Activated B cell treated with CpG ODN at 0.5 μM for 24 hours (primary cell): ENCODE measurements at regions of chr14 and their contacts with region 1.

Region 1: DNA sequence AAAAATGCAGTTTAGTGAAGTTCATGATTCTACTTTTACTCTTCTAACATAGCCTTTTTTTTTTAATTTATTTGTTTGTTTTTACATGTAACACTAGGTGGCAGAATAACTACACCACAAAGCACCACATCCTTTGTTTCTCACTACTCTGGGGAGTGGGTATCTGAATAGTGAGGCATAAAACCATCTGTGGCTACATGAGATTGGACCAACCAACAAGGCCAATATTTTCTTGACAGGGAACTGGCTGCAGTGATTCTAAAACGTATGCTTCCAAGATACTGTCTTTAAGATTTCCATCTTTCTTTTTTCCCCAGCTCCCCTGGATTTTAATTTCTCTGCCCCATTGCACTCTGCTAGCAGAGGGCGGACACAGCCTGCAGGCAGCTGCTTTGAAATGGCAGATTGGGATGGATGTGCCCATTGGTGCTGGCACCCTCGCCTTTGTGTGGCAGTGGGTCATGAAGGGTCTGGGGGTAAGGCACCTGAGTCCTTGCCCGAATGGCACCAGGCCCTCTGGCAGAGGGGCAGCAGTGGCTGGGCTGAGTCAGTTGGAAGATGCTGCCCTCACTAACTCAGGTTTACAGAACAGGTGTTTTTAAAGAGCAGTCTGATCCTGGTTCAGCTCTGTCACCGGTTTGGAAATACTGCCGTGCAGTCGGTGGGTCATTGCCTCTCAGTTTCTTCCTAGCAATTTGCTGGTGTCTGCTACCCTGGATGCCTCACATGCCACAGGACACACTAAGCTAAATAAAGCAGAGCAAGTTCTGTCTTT is 429.1 kb downstream of the RAD51B start:
- DNase-seq: peak; percentile 34
- ATAC-seq: peak; percentile 77
- H3K4me3 Mint-ChIP-seq: peak overlapping the region; percentile 19
- H3K27ac Mint-ChIP-seq: peak overlapping the region; percentile 90
- H3K4me1 Mint-ChIP-seq: peaks cover 72% of the 10 kb centered on the region
- H3K27me3 Mint-ChIP-seq: no peaks in the 10 kb centered on the region
- CTCF ChIP-seq: no peak

Region 2: DNA sequence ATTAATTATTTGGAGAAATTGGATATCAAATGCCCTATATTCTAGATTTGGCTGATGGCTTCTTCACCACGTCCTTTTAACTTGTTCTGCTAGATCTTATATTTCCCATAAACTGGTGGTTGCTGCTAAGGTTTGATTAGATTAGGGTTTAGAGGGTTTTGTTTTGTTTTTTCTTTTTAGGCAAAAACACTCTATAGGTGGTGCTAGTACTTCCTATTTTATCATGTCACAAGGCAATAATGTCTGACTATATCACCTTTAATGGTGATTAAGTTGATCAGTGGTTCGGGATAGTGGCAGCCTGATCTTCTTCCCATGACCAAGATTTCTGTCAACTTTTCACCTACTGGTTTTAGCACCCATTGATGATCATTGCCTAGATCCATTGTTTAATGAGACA is 26.1 kb after region 1 on chr14:
- CTCF ChIA-PET with region 1: interaction called, 15 read pairs
- POLR2A ChIA-PET with region 1: interaction called, 213 read pairs
- intact Hi-C with region 1: loop called (anchors 1 kb)
- DNase-seq: no peak
- ATAC-seq: no peak
- H3K4me3 Mint-ChIP-seq: peak overlapping the region; percentile 65
- H3K27ac Mint-ChIP-seq: peak overlapping the region; percentile 99
- H3K4me1 Mint-ChIP-seq: peaks cover 93% of the 10 kb centered on the region
- H3K27me3 Mint-ChIP-seq: no peaks in the 10 kb centered on the region
- CTCF ChIP-seq: no peak

Region 3: DNA sequence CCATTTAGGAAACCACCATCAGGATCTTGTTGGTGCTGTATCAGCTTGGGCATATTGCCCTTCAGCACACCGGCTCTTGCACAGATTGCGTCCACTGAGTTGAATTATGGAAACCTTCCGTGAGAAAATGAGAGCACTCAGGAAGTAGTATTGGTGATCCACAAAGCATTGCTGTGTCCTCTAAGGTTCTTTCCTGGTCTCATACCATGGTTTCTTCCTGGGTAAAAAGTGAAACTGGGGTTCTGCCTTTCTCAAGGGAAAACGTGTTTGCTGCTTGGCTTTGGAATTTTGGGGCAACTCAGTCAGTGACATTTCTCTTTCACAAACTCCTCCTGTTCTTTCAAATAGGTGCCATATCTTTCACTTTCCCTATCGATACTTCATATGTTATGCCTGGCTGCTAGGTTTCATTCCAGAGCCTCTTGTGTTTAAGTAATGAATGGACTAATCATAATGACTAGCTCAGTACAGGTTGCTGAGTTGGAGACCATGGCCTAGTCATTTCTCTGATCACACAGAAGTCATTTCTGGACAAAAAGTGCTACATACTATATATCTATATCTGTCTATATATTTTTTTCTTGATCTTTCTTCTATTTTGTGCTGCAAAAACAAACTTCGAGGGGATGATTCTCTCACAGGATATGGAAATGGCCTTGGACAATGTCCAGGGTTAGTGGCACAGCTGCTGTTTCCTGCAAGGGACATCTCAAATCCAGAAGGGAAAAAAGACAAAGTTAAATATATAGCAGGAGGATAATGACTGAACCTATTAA is 120.8 kb after region 1 on chr14:
- CTCF ChIA-PET with region 1: interaction called, 11 read pairs
- POLR2A ChIA-PET with region 1: interaction called, 21 read pairs
- intact Hi-C with region 1: no loop called
- DNase-seq: no peak
- ATAC-seq: peak; percentile 23
- H3K4me3 Mint-ChIP-seq: peak overlapping the region; percentile 59
- H3K27ac Mint-ChIP-seq: peak overlapping the region; percentile 95
- H3K4me1 Mint-ChIP-seq: peaks cover 94% of the 10 kb centered on the region
- H3K27me3 Mint-ChIP-seq: no peaks in the 10 kb centered on the region
- CTCF ChIP-seq: no peak

Region 4: DNA sequence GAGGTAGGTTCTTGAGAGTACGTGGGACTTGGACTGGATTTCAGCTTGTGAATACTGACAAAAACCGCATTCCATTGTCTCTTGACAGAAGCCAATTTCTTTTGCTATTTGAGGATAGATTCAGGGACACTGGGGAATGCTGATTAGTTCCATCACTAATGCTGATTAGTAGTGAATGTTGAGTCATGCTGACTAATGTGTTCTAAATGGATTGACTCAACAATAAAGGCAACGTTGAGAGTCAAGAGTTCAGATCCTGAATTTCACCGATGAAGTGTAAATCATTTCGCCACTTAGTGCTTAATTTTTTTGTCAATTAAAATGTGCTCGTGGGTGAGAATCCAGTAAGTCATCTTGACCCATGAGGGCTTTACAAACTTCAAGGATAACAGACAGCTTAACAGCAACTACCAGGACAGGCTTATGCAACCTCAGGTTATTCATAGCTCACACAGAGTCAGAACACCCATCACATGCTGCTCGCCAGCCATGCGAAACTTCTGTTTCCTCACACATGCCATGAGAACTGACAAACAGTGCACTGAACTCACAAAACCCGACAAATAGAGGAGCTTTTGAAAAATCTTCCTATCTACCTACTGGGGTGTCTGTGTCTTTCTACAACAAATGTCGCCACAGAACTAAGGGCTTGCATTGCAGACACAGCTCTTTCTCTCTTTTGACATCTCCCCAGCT is 227.7 kb after region 1 on chr14:
- CTCF ChIA-PET with region 1: no interaction called
- POLR2A ChIA-PET with region 1: interaction called, 9 read pairs
- intact Hi-C with region 1: loop called (anchors 2 kb)
- DNase-seq: peak; percentile 40
- ATAC-seq: peak; percentile 83
- H3K4me3 Mint-ChIP-seq: peak overlapping the region; percentile 62
- H3K27ac Mint-ChIP-seq: peak overlapping the region; percentile 99
- H3K4me1 Mint-ChIP-seq: peaks cover 89% of the 10 kb centered on the region
- H3K27me3 Mint-ChIP-seq: no peaks in the 10 kb centered on the region
- CTCF ChIP-seq: no peak

Region 5: DNA sequence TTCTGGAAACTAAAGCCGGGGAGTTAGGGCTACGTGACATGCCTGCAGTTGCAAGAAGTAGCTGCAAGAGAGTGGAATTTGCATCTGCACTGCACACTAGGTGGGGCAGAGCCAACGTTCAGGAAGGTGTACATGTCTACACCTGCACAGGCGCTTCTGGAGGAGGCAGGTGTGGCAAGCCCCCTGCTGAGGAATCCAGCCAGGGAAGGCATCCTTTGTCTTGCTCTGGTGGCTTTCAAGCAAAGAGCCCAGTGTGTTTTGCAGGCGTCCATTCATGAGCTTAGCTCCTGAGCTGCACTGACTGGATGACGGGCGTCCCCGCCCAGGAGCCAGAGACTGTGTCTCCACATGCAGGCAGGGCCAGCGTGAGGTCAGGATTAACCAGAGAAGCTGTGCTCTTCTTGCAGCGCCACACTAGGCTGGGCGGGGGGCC is 427.9 kb after region 1 on chr14:
- CTCF ChIA-PET with region 1: no interaction called
- POLR2A ChIA-PET with region 1: no interaction called
- intact Hi-C with region 1: no loop called
- DNase-seq: no peak
- ATAC-seq: no peak
- H3K4me3 Mint-ChIP-seq: no peak overlapping the region
- H3K27ac Mint-ChIP-seq: peak overlapping the region; percentile 61
- H3K4me1 Mint-ChIP-seq: peaks cover 63% of the 10 kb centered on the region
- H3K27me3 Mint-ChIP-seq: no peaks in the 10 kb centered on the region
- CTCF ChIP-seq: no peak

Region 6: DNA sequence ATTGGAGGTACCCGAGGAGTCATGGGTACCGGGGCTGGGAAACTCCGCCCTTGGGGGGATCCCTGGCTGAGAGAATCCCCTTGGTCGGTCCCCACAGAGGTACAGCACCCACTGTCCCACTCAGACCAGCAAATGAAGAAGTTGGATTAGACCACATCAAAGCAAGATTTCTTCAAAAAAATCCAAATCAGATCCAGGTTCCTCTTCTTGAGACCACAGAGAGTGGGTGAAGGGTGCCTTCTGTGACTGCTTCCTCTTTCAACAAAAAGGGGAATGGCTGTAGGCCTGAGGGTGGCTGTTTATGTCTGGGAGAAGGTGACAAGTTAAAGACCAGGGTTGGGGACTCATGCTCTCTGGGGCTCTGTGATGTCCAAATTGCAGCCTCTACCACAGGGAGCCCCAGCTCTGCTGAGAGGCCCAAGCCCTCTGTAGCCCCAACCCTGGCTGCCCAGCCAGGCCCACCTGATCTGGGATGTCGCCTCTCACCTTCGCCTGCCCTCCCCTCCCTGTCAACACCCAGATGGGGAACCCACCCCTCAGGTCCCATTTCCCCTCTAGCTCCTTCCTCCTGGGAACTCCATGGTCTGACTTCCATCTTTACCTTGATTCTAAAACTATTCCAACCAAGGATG is 493.3 kb after region 1 on chr14:
- CTCF ChIA-PET with region 1: no interaction called
- POLR2A ChIA-PET with region 1: no interaction called
- intact Hi-C with region 1: loop called (anchors 5 kb)
- DNase-seq: peak; percentile 65
- ATAC-seq: peak; percentile 89
- H3K4me3 Mint-ChIP-seq: peak overlapping the region; percentile 32
- H3K27ac Mint-ChIP-seq: peak overlapping the region; percentile 86
- H3K4me1 Mint-ChIP-seq: peaks cover 54% of the 10 kb centered on the region
- H3K27me3 Mint-ChIP-seq: no peaks in the 10 kb centered on the region
- CTCF ChIP-seq: no peak

Region 7: DNA sequence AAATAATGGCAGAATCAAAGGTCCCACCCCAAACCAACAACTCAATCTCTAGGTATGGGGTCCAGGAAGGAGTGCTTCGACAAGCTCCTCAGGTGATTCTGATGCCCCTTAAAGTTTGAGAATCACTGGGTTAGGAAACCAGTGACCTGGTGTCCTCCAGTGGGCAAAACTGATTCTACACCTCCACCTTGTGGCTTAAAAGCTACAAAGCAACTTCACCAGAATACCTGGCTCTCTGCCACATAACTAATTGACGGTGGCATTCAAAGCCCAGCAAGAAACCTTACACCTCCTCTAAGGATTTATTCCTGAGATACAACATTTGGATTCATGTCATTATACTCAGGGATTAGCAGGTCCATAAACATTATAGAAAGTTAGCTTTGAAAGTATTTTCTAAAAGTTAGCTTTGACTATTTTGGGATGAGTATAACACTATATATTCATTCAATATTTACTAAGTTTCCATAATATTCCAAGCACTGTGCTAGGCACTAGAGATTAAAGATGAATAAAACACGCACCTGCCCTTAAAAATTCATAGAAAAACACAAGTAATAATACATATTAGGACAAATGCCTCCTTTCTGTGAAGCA is 858.8 kb after region 1 on chr14:
- CTCF ChIA-PET with region 1: interaction called, 3 read pairs
- POLR2A ChIA-PET with region 1: no interaction called
- intact Hi-C with region 1: loop called (anchors 5 kb)
- DNase-seq: no peak
- ATAC-seq: peak; percentile 50
- H3K4me3 Mint-ChIP-seq: no peak overlapping the region
- H3K27ac Mint-ChIP-seq: no peak overlapping the region
- H3K4me1 Mint-ChIP-seq: no peaks in the 10 kb centered on the region
- H3K27me3 Mint-ChIP-seq: no peaks in the 10 kb centered on the region
- CTCF ChIP-seq: no peak